Posterior vena cava (tissue), 2 donors: ENCODE measurements at regions of chr2 and their contacts with region 1.

Region 1: DNA sequence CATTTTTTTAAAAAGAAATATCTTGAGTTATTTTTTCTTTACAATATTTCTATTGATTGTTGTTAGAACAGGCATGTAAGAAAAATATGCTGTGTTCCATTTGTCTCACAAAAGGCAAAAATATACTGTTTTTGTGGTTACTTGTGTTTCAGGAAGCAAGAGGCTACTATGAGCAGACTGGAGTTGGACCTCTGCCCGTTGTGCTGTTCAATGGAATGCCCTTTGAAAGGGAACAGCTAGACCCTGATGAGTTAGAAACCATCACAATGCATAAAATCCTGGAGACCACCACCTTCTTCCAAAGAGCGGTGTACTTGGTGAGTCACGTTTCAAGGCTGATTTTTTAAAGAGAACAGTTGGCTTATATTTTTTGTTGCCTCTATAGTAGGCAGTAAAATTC is 54.7 kb downstream of the UGGT1 start:
- DNase-seq: no peak

Region 2: GRCh38 chr2:128134573-128134972 is 11.1 kb before region 1 on chr2:
- intact Hi-C with region 1: loop called in 1 of 2 experiments (anchors 1 kb)
- DNase-seq: no peak